ENCODE measurements at regions of chr19 and their contacts with region 1.

Region 1: DNA sequence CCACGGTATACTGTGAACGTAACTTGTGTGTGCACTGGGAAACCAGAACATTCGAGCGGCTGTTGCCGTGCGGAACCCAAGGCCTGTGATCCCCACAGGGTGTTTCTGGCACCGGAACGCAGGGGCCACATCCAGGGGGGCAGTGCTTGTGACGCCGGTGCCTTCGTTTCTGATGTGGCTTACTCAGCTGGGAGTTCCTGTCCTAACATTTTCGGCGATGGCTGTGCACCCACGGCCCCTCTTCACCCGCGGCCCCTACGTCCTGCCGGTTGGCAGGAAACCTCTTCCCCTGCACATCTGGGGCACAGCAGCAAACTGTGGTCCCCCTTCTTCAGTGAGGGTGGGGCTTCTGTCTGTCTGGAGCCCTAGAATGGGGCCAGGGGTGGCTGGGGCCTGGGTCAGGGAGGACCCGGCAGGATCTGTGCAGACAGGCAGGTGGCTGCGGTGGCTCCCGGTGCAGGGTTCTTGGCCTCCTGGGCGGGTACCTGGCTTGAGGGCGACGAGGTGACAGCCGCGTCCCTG is 26.2 kb downstream of the CSNK1G2 start:
- DNase-seq: no peak
- ATAC-seq: no peak
- H3K4me3 Mint-ChIP-seq: no peak overlapping the region
- H3K27ac Mint-ChIP-seq: no peak overlapping the region
- H3K4me1 Mint-ChIP-seq: peaks cover 12% of the 10 kb centered on the region
- H3K27me3 Mint-ChIP-seq: no peaks in the 10 kb centered on the region
- CTCF ChIP-seq: no peak

Region 2: DNA sequence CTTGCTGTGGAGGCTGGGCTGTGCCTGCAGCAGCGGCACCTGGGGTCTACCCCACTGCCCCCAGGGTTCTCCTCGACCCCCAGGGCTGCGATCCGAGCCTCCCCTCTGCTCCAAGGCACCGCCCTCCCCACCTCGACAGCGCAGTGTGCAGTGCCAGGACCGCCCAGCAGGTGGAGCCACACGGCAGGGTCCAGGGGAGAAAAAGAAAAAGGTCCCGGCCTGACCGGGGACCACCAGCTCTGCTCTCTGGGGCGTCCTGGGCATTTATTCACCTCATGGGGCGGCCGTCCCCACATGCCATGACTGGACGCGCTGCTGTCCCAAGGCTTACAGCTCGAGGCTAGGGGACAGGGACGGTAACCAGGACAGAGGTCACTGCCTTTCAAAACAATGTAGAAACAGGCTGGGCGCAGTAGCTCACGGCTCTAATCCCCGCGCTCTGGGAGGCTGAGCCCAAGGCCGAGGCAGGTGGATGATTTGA is 129.5 kb before region 1 on chr19:
- CTCF ChIA-PET with region 1: no interaction called
- POLR2A ChIA-PET with region 1: no interaction called
- intact Hi-C with region 1: no loop called
- DNase-seq: peak; percentile 67
- ATAC-seq: peak; percentile 86
- H3K4me3 Mint-ChIP-seq: no peak overlapping the region
- H3K27ac Mint-ChIP-seq: no peak overlapping the region
- H3K4me1 Mint-ChIP-seq: peaks cover 46% of the 10 kb centered on the region
- H3K27me3 Mint-ChIP-seq: no peaks in the 10 kb centered on the region
- CTCF ChIP-seq: peak; percentile 85

Region 3: DNA sequence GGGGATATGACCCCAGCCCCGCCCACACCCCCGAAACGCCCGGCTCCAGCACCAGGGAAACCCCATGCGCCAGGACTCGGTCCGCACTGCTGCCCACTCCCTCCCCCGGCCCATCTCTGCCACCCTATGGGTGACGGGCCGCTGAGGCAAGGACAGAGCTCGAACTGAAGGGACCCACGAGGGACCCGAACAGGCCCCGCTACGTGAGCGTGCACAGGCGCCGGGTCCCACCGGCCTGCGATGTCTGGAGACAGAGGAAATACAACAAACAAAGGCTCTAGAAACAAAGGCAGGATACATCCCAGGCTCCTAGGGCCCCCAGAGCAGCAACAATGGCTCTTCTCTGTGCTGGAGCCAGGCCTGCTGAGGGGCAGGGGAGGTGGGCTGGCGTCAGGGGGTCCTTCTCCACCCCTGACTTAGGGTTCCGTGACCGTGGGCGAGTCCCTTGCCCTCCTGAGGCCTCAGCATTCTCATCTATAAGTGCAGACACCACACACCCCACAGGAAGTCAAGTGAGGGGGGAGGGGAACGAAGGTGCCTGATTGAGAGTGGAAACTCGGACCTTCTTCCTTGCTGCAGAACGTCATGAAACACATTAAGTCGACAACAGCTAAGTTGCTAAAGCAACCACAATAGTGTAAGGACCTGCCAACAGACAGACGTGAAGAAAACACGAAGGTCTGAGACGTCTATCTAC is 84.9 kb before region 1 on chr19:
- CTCF ChIA-PET with region 1: no interaction called
- POLR2A ChIA-PET with region 1: no interaction called
- intact Hi-C with region 1: no loop called
- DNase-seq: no peak
- ATAC-seq: no peak
- H3K4me3 Mint-ChIP-seq: peak overlapping the region; percentile 58
- H3K27ac Mint-ChIP-seq: peak overlapping the region; percentile 61
- H3K4me1 Mint-ChIP-seq: peaks cover 39% of the 10 kb centered on the region
- H3K27me3 Mint-ChIP-seq: no peaks in the 10 kb centered on the region
- CTCF ChIP-seq: no peak

Region 4: DNA sequence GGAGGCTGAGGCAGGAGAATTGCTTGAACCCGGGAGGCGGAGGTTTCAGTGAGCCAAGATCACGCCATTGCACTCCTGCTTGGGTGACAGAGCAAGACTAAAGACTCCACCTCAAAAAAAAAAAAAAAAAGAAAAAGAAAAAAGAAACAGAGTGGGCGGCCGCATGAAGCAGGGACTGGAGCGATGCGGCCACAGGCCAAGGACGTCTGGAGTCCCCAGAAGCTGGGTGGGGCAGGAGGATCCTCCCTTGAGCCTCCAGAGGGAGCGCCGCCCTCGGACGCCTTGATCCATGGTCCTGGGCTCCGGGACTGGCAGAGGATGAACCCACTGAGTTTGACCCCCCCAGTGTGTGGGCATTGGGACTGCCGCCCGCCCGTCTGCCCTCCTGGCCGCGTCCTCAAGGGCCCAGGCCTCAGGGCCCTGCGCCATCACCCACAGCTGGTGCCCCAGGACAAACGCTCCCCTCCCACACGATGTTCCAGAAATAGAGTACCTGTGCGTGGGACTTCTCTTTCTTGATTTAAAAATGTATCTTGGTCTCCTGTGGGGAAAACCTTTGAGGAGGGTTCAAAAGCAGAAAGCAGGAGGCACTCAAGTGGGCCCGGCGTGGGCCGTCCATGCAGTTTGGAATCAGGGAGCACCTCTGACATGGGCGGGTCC is 32.8 kb after region 1 on chr19:
- CTCF ChIA-PET with region 1: no interaction called
- POLR2A ChIA-PET with region 1: no interaction called
- intact Hi-C with region 1: loop called (anchors 5 kb)
- DNase-seq: no peak
- ATAC-seq: no peak
- H3K4me3 Mint-ChIP-seq: no peak overlapping the region
- H3K27ac Mint-ChIP-seq: no peak overlapping the region
- H3K4me1 Mint-ChIP-seq: peaks cover 5% of the 10 kb centered on the region
- H3K27me3 Mint-ChIP-seq: no peaks in the 10 kb centered on the region
- CTCF ChIP-seq: no peak

Region 5: GRCh38 chr19:2168619-2169424 is 201.7 kb after region 1 on chr19:
- CTCF ChIA-PET with region 1: no interaction called
- POLR2A ChIA-PET with region 1: no interaction called
- intact Hi-C with region 1: no loop called
- DNase-seq: peak; percentile 74
- ATAC-seq: peak; percentile 49
- H3K4me3 Mint-ChIP-seq: peak overlapping the region; percentile 84
- H3K27ac Mint-ChIP-seq: peak overlapping the region; percentile 92
- H3K4me1 Mint-ChIP-seq: peaks cover 84% of the 10 kb centered on the region
- H3K27me3 Mint-ChIP-seq: no peaks in the 10 kb centered on the region
- CTCF ChIP-seq: no peak